OCI-LY7 (cell line): ENCODE measurements at regions of chr11 and their contacts with region 1.

Region 1: DNA sequence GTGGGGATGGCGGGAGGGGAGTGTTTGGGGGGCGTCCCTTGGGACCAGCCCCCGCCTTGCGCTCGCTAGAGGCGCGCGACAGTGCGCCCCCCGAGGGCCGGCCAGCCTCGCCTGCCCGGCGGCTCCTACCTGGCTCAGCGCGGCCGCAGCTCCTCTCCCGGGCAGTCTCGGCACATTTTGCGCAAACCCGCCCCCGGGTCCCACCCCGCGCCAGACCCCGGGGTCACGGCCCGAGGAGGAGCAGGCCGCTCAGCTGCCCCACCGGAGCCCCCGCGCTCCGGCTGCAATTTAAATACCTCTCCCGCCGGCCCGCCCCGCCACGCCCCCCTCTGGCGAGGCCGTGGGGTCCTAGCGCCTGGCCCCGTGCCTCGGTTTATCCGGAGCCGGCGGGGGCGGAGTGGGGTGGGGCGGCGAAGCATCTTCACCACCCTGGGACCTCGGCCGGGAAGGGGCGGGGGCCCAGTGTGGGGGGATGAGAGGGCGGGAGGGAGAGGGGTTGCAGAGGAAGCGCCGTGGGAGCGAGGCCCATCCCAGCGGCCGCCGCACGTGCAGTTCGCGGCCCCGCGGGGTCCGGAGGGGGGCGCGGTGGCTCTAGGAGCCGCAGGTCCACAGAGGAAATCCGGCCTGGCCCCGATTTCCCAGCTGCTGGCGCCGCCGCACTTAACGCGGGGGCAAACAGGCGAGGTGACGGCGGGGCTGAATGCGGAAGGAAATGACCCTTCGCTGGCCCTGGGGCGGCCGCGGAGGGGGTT is at the start of gene LRRC32:
- DNase-seq: peak; percentile 83
- H3K4me3 ChIP-seq: peak within 1 kb of the TSS; percentile 79
- H3K27ac ChIP-seq: peak within 1 kb of the TSS; percentile 94
- H3K4me1 ChIP-seq: peaks cover 83% of the 10 kb centered on the region
- CTCF ChIP-seq: peak; percentile 50
- total RNA-seq, gene LRRC32: 5.4 and 5.5 TPM in 2 replicates

Region 2: DNA sequence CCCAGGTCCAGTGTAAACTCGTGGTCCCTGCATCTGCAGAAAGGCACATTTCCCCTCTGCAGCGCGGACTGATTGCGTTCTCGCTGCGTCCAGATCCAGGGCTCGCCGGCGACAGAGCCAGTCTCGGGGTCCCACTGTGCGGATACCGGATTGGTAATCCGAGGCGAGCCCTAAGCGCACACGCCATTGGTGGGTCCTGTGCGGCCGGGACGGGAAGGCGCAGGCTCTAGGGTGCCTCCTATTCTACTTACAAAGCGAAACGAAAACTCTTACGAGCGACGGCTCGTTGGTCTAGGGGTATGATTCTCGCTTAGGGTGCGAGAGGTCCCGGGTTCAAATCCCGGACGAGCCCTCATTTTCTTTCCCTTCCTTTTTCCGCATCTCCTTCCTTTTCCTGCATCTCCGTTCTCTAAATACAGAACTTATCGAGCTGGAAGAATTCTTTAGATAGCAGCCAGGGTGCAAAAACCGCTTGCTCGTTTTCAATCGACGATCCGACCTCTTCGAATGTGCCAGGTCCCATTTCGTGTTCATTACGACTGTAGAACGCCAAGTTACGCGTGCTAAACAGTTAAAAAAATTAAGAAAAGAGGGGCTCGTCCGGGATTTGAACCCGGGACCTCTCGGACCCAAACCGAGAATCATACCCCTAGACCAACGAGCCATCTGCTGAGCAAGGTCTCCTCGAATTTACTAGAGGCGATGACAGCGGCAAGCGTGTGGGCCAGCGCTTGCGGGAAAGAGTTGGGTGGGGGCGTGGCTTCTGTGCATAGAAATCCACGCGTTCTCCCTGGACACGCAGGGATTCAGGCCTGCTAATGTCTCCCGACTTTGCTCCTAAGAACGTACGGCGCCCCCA is 435.2 kb before region 1 on chr11:
- CTCF ChIA-PET with region 1: no interaction called
- POLR2A ChIA-PET with region 1: no interaction called
- intact Hi-C with region 1: loop called (anchors 1 kb)
- DNase-seq: peak; percentile 94
- H3K4me3 ChIP-seq: peak overlapping the region; percentile 79
- H3K27ac ChIP-seq: peak overlapping the region; percentile 69
- H3K4me1 ChIP-seq: peaks cover 33% of the 10 kb centered on the region
- CTCF ChIP-seq: no peak

Region 3: GRCh38 chr11:76444384-76445123 is 226.1 kb before region 1 on chr11 and contains the start of gene EMSY:
- CTCF ChIA-PET with region 1: no interaction called
- POLR2A ChIA-PET with region 1: no interaction called
- intact Hi-C with region 1: loop called (anchors 5 kb)
- DNase-seq: peak; percentile 97
- H3K4me3 ChIP-seq: peak within 1 kb of the TSS; percentile 99
- H3K27ac ChIP-seq: peak within 1 kb of the TSS; percentile 64
- H3K4me1 ChIP-seq: peaks cover 19% of the 10 kb centered on the region
- CTCF ChIP-seq: no peak
- total RNA-seq, gene EMSY: 26.3 and 45.5 TPM in 2 replicates

Region 4: DNA sequence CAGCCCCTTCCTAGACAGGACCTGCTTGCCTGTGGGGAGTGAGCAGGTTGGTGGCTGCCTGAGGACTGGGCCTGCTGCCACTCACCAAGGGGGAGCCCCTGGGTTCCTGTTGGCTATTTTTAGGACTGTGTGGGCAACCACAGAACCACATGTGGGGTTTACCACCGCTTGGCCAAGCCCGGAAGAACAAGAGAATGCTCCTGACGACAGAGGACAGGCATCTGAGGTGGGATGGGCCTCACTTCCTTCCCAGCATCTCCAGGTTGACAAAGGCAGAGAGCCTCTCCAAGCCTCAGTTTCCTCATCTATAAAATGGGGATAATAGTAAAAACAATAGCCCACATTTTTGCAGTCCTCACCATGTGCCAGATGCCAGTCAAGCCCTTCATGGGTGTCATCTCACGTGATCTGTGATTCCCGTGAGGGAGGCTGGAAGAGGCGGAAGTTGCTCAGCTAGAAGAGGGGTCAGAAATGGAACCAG is 43.7 kb before region 1 on chr11:
- CTCF ChIA-PET with region 1: interaction called, 4 read pairs
- POLR2A ChIA-PET with region 1: interaction called, 9 read pairs
- intact Hi-C with region 1: loop called (anchors 1 kb)
- DNase-seq: peak; percentile 84
- H3K4me3 ChIP-seq: peak overlapping the region; percentile 0
- H3K27ac ChIP-seq: peak overlapping the region; percentile 31
- H3K4me1 ChIP-seq: peaks cover 47% of the 10 kb centered on the region
- CTCF ChIP-seq: no peak

Region 5: DNA sequence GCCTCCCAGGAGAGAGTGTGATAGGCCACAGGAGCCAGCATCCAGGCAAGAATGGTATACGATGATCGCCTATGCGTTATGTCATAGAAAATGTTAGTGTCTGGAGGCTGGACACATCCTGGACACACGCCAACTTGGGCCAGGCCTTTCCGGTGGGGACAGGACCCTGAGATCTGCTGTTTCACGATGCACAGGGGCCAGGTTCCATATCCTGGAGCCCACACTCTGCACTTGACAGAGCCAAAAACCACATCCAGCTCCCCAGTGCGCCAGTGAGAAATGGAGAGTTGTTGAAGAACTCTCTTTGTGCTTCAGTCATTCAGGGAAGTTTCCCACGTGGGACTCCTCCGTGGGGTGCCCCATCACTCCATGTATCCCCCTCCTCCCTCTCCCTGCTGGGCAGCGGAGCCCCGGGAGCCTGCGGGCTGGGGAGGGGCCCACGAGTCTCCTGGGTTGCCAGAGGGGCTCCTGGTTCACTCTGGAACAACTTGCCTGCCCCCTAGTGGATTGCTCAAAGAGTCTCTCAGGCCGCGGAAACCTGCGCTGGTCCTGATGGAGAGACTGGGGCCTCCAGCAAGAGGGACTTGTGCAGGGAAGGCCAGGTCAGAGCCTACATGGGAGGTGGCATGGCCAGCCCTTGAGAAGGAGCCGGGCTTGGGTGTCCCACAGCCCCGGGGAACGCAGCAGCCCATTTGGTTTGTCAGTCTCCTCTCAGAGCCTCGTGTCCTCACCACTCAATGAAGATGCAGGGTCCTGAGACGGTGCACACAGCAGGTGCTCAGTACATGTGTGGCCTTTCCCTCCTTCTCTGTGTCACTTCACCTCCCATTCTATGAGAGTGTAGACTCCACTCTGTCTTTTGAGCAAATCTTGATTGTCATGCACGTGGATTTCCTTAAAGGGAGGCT is 10.1 kb after region 1 on chr11:
- CTCF ChIA-PET with region 1: no interaction called
- POLR2A ChIA-PET with region 1: interaction called, 13 read pairs
- intact Hi-C with region 1: no loop called
- DNase-seq: peak; percentile 87
- H3K4me3 ChIP-seq: no peak overlapping the region
- H3K27ac ChIP-seq: no peak overlapping the region
- H3K4me1 ChIP-seq: peaks cover 52% of the 10 kb centered on the region
- CTCF ChIP-seq: peak; percentile 97